ENCODE measurements at regions of chr12 and their contacts with region 1.

Region 1: GRCh38 chr12:6873094-6874014 is at the start of gene SPSB2:
- DNase-seq: peak; percentile 100
- ATAC-seq: peak; percentile 74
- H3K4me3 Mint-ChIP-seq: peak within 1 kb of the TSS; percentile 93
- H3K27ac Mint-ChIP-seq: peak within 1 kb of the TSS; percentile 86
- H3K4me1 Mint-ChIP-seq: peaks cover 50% of the 10 kb centered on the region
- H3K27me3 Mint-ChIP-seq: no peaks in the 10 kb centered on the region
- total RNA-seq, gene SPSB2: 1.7 to 2.2 TPM

Region 2: DNA sequence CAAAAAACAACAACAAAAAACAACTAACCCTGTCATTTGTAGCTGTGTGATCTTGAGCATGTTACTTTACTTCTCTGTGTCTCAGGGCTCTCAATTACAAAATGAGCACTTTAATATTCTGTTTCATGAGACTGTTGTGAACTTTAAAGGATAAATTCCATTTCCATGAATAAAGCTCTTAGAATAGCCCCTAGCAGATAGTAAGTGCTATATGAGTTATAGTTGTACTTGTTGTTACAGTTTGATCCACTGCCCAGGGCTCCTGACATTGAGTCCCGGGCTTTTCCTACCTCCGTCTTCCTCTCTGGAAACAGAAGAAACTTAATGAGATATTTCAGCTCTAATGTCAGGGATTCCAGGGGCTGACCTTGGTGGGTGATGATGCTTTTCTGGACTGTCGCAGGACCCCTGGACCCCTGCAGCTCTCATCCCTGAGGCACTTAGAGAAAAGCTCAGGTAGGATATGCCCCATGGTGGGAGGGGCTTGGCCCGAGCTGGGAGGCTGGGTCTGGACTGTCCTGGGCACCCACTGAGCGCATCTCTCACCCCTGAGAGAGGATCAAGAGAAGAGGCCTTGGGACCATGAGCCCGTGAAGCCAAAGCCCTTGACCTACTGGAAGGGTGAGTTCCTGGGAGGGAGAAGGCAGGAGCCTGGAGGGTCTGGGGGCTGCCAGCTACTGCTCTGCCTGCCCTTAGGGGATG is 40.0 kb before region 1 on chr12:
- CTCF ChIA-PET with region 1: interaction called, 10 read pairs
- POLR2A ChIA-PET with region 1: no interaction called
- intact Hi-C with region 1: no loop called
- DNase-seq: no peak
- ATAC-seq: no peak
- H3K4me3 Mint-ChIP-seq: no peak overlapping the region
- H3K27ac Mint-ChIP-seq: no peak overlapping the region
- H3K4me1 Mint-ChIP-seq: peaks cover 13% of the 10 kb centered on the region
- H3K27me3 Mint-ChIP-seq: peaks cover 7% of the 10 kb centered on the region

Region 3: DNA sequence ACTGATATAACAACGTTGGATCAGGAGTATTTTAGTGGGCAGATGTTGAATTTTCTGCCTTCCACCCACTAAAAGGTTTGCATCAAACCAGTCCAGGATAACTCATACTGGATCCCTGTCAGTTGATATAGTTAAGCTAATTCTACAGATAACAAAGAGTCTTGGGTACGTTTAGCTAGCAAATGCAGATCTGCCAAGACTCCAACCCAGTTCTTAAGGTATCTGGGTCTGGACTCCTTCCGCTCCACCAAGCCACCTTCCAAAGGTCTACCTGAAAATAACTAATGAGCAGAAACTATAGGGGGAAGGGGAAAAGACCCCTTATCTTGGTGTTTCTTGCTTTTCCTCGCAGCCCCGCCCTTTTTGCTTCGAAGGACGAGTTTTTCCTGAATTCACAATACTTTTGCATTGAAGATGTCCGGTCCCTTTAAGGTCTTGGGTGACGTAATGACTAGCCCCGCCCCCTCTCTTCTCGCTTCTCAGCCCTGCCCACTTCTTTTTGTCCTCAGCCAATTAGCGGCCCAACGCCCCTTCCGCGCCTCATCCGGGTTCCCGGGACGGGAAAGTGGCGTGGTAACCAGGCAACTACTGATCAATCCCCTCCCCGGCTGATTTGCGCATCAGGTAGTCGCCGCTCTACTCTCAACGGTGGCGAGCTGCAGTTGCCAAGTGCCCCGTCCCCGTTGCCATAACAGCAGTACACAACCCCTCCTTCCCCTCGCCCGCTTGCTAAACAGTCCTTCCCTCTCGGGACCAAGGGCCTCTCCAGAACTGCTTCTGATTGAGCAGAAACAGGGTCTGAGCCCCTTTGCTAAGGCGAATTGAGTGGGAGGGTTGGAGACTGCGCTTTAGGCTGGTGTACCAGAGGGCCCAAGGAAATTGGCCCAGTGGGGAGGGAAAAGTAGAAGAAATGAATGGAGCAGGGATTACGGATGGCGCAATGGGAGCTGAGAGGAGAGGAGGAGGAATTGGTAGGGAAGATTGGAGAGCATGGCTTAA is 31.2 kb after region 1 on chr12 and contains the start of gene LRRC23:
- CTCF ChIA-PET with region 1: interaction called, 23 read pairs
- POLR2A ChIA-PET with region 1: interaction called, 4 read pairs
- intact Hi-C with region 1: loop called (anchors 1 to 5 kb)
- DNase-seq: peak; percentile 99
- ATAC-seq: peak; percentile 97
- H3K4me3 Mint-ChIP-seq: no peak within 1 kb of the TSS
- H3K27ac Mint-ChIP-seq: no peak within 1 kb of the TSS
- H3K4me1 Mint-ChIP-seq: peaks cover 14% of the 10 kb centered on the region
- H3K27me3 Mint-ChIP-seq: no peaks in the 10 kb centered on the region
- total RNA-seq, gene LRRC23: 6.4 to 7.0 TPM

Region 4: GRCh38 chr12:6914246-6914946 is 41.0 kb after region 1 on chr12 and contains the start of gene ENO2:
- CTCF ChIA-PET with region 1: interaction called, 5 read pairs
- POLR2A ChIA-PET with region 1: interaction called, 3 read pairs
- intact Hi-C with region 1: loop called (anchors 1 to 2 kb)
- DNase-seq: peak; percentile 92
- ATAC-seq: peak; percentile 92
- H3K4me3 Mint-ChIP-seq: peak within 1 kb of the TSS; percentile 98
- H3K27ac Mint-ChIP-seq: peak within 1 kb of the TSS; percentile 80
- H3K4me1 Mint-ChIP-seq: peaks cover 35% of the 10 kb centered on the region
- H3K27me3 Mint-ChIP-seq: no peaks in the 10 kb centered on the region
- total RNA-seq, gene ENO2: 301 to 317 TPM

Region 5: GRCh38 chr12:6937481-6938297 is 64.3 kb after region 1 on chr12:
- CTCF ChIA-PET with region 1: interaction called, 8 read pairs
- POLR2A ChIA-PET with region 1: interaction called, 5 read pairs
- intact Hi-C with region 1: loop called in 1 of 2 experiments (anchors 5 kb)
- DNase-seq: peak; percentile 97
- ATAC-seq: peak; percentile 93
- H3K4me3 Mint-ChIP-seq: peak overlapping the region; percentile 83
- H3K27ac Mint-ChIP-seq: peak overlapping the region; percentile 96
- H3K4me1 Mint-ChIP-seq: peaks cover 52% of the 10 kb centered on the region
- H3K27me3 Mint-ChIP-seq: no peaks in the 10 kb centered on the region

Region 6: GRCh38 chr12:6944381-6945186 is 71.2 kb after region 1 on chr12:
- CTCF ChIA-PET with region 1: interaction called, 9 read pairs
- POLR2A ChIA-PET with region 1: interaction called, 27 read pairs
- intact Hi-C with region 1: loop called (anchors 1 to 5 kb)
- DNase-seq: peak; percentile 94
- ATAC-seq: peak; percentile 54
- H3K4me3 Mint-ChIP-seq: peak overlapping the region; percentile 81
- H3K27ac Mint-ChIP-seq: peak overlapping the region; percentile 97
- H3K4me1 Mint-ChIP-seq: peaks cover 59% of the 10 kb centered on the region
- H3K27me3 Mint-ChIP-seq: no peaks in the 10 kb centered on the region